ENCODE measurements at regions of chr16 and their contacts with region 1.

Region 1: DNA sequence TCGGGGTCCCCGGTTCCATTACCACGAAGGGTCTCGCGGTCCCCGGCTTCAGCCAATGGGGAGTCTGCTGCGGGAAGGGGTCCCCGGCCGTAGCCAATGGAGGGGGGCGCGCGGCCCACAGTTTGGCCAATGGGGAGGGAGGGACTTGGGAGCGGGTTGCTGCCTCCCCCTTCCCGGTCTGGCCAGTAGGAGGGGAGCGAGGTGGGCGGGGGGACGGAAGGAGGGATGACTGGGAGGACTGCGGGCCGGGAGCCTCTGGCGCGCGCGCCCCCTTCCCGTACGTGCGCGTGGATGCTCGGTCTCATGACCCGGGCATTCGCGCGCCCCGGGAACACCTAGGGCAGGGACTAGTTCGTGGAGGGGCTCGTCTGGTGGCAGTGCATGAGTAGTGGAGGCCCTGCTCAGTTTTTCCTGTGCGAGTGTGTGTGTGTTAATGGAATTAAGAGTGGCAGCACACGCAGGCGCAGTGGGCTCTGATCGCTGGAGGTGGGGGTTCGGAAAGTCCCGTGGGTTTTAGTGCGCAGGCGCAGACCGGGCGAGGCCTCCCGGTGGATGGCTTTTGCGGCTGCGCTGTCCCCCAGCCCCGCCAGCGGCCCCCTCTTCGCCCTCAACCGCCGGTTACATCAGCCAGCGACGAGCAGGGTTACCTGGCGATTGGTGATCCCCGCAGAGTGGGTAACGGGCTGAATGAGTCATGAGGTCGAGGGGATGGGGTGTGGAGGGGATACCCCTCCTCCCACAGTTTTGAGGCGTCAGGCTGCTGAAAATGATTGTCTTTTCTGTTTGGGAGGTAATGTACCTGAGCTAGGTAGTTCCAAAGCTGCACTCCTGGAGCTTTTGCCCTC is 1.3 kb downstream of the ATXN2L start:
- DNase-seq: peak; percentile 96
- H3K4me3 Mint-ChIP-seq: peak overlapping the region; percentile 99
- H3K27ac Mint-ChIP-seq: peak overlapping the region; percentile 99
- H3K4me1 Mint-ChIP-seq: peaks cover 56% of the 10 kb centered on the region
- H3K27me3 Mint-ChIP-seq: no peaks in the 10 kb centered on the region

Region 2: DNA sequence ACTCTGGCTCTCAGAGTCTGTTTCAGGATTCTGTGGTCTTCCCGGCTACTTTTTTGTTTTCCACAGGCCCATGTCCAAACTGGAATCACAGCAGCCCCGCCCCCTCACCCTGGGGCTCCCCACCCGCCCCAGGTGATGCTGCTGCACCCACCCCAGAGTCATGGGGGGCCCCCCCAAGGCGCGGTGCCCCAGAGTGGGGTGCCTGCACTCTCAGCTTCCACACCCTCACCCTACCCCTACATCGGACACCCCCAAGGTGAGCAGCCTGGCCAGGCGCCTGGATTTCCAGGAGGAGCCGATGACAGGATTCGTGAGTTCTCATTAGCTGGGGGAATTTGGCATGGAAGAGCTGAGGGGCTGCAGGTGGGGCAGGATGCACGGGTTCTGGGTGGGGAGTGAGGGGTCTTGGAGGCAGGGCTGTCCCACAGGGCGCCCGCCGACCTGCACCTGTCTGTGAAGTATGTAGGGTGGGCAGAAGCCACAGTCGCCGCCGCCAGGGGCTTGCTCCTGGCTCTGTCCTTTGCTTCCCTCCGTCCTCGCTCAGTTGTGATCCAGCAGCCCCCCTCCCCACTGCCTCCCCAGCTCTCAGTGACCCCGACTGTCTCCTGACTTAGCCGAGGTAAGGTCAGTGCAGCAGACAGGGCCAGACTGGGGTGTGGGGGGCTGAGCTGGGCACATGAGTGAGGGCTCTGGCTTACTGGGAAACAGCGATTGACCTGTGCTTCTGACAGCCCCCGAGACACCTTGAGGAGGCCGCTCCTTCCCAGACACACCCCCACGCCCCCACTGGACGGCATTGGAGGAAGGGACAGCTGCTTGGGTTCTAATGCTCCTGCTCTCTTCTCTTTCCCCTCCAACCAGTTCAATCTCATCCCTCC is 12.0 kb after region 1 on chr16:
- CTCF ChIA-PET with region 1: interaction called, 3 read pairs
- POLR2A ChIA-PET with region 1: interaction called, 28 read pairs
- DNase-seq: no peak
- H3K4me3 Mint-ChIP-seq: no peak overlapping the region
- H3K27ac Mint-ChIP-seq: no peak overlapping the region
- H3K4me1 Mint-ChIP-seq: peaks cover 3% of the 10 kb centered on the region
- H3K27me3 Mint-ChIP-seq: no peaks in the 10 kb centered on the region

Region 3: GRCh38 chr16:28879841-28880588 is 55.9 kb after region 1 on chr16:
- CTCF ChIA-PET with region 1: no interaction called
- POLR2A ChIA-PET with region 1: interaction called, 18 read pairs
- DNase-seq: peak; percentile 93
- H3K4me3 Mint-ChIP-seq: peak overlapping the region; percentile 88
- H3K27ac Mint-ChIP-seq: peak overlapping the region; percentile 26
- H3K4me1 Mint-ChIP-seq: peaks cover 35% of the 10 kb centered on the region
- H3K27me3 Mint-ChIP-seq: peaks cover 6% of the 10 kb centered on the region

Region 4: GRCh38 chr16:28891964-28892890 is 68.1 kb after region 1 on chr16:
- CTCF ChIA-PET with region 1: no interaction called
- POLR2A ChIA-PET with region 1: no interaction called
- DNase-seq: no peak
- H3K4me3 Mint-ChIP-seq: no peak overlapping the region
- H3K27ac Mint-ChIP-seq: no peak overlapping the region
- H3K4me1 Mint-ChIP-seq: no peaks in the 10 kb centered on the region
- H3K27me3 Mint-ChIP-seq: no peaks in the 10 kb centered on the region

Region 5: GRCh38 chr16:29007730-29008593 is 183.9 kb after region 1 on chr16:
- CTCF ChIA-PET with region 1: no interaction called
- POLR2A ChIA-PET with region 1: no interaction called
- DNase-seq: peak; percentile 80
- H3K4me3 Mint-ChIP-seq: no peak overlapping the region
- H3K27ac Mint-ChIP-seq: peak overlapping the region; percentile 88
- H3K4me1 Mint-ChIP-seq: peaks cover 51% of the 10 kb centered on the region
- H3K27me3 Mint-ChIP-seq: no peaks in the 10 kb centered on the region